K562 (cell line): ENCODE measurements at regions of chr17 and their contacts with region 1.

Region 1: GRCh38 chr17:44066204-44066930 is at the start of gene LSM12:
- DNase-seq: peak; percentile 92 to 97 (median 96)
- ATAC-seq: peak; percentile 81
- H3K4me3 ChIP-seq: peak within 1 kb of the TSS; percentile 94
- H3K27ac ChIP-seq: peak within 1 kb of the TSS; percentile 95
- H3K4me1 ChIP-seq: peaks cover 28 to 33% of the 10 kb centered on the region in 2 experiments; a peak in 4 of 5 replicates
- H3K27me3 ChIP-seq: no peaks in the 10 kb centered on the region
- CTCF ChIP-seq: no peak
- EP300 ChIP-seq: no peak
- POLR2A ChIP-seq: peak; percentile 92
- RAD21 ChIP-seq: no peak
- polyA plus RNA-seq, gene LSM12: 89.3 to 258 TPM

Region 2: DNA sequence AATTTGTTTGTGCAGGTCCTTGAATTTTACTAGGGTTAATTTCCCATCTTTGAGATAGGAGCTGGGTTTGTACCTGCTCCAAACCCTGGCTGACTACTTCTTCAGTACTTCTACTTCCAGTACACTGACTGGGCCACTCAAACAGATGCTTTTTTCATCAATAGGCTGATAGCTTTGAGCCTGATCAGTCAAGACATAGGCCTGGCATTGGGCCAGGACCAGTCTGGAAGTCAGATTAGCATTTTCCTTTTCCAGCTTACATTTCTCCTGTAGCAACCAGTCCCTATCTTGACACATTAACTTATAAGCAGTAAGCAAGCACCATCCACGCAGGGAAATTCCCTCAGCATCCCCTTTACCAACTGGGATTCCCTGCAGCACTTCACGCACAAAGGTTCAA is 44.1 kb before region 1 on chr17:
- CTCF ChIA-PET with region 1: no interaction called
- POLR2A ChIA-PET with region 1: no interaction called
- in situ Hi-C with region 1: no loop called
- intact Hi-C with region 1: no loop called
- DNase-seq: no peak
- ATAC-seq: no peak
- H3K4me3 ChIP-seq: no peak overlapping the region
- H3K27ac ChIP-seq: no peak overlapping the region
- H3K4me1 ChIP-seq: peaks cover 9 to 14% of the 10 kb centered on the region in 2 experiments; a peak in 4 of 5 replicates
- H3K27me3 ChIP-seq: no peaks in the 10 kb centered on the region
- CTCF ChIP-seq: no peak
- EP300 ChIP-seq: no peak
- POLR2A ChIP-seq: no peak
- RAD21 ChIP-seq: no peak

Region 3: GRCh38 chr17:44053125-44053872 is 13.1 kb before region 1 on chr17:
- CTCF ChIA-PET with region 1: no interaction called
- POLR2A ChIA-PET with region 1: interaction called, 11 read pairs
- in situ Hi-C with region 1: no loop called
- intact Hi-C with region 1: no loop called
- DNase-seq: no peak
- ATAC-seq: no peak; the same call in 1 of the 3 replicates
- H3K4me3 ChIP-seq: no peak overlapping the region
- H3K27ac ChIP-seq: no peak overlapping the region
- H3K4me1 ChIP-seq: no peaks in the 10 kb centered on the region; a peak in 1 of 5 replicates
- H3K27me3 ChIP-seq: no peaks in the 10 kb centered on the region
- CTCF ChIP-seq: no peak
- EP300 ChIP-seq: no peak
- POLR2A ChIP-seq: no peak
- RAD21 ChIP-seq: no peak